GM10248 (cell line): ENCODE measurements at regions of chr6 and their contacts with region 1.

Region 1: GRCh38 chr6:80104520-80104919 is 2.0 kb upstream of the BCKDHB start:
- DNase-seq: no peak
- CTCF ChIP-seq: no peak

Region 2: DNA sequence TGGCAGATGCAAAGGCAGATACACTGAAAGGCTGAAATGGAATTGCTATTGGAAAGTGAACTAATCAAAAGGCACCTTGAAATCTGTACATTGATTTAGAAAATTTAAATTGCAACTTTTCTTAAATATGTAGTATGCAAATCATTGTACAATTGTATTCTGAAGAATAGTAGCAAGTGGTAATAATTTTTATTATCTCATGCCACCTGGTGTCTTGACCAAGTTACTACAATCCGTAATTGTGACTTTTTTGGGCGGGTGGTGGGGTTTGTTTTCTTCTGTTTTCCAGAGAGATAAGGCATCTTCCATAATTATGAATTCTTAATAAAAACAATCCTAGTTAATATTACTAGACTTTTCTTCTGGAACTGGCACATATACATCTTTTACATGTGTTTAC is 10.5 kb before region 1 on chr6:
- CTCF ChIA-PET with region 1: interaction called, 12 read pairs
- POLR2A ChIA-PET with region 1: interaction called, 3 read pairs
- DNase-seq: peak; percentile 26
- CTCF ChIP-seq: peak; percentile 30

Region 3: GRCh38 chr6:80134065-80134464 is 29.5 kb after region 1 on chr6:
- CTCF ChIA-PET with region 1: no interaction called
- POLR2A ChIA-PET with region 1: no interaction called
- DNase-seq: no peak
- CTCF ChIP-seq: no peak